Heart right ventricle (tissue), 16 donors: ENCODE measurements at regions of chr11 and their contacts with region 1.

Region 1: GRCh38 chr11:12746593-12747097 is 72.4 kb downstream of the TEAD1 start:
- DNase-seq: peak; percentile 70 to 77
- ATAC-seq: peak; percentile 54 to 81 (median 76)
- H3K4me3 ChIP-seq: no peak overlapping the region
- H3K27ac ChIP-seq: peak overlapping the region in 9 of 10 donors; percentile 18 to 79 (median 55)
- H3K4me1 ChIP-seq: peaks cover 7 to 63% (median 26%) of the 10 kb centered on the region in 9 donors
- H3K27me3 ChIP-seq: no peaks in the 10 kb centered on the region
- CTCF ChIP-seq: peak in 1 of 9 donors; percentile 8

Region 2: GRCh38 chr11:12430955-12431354 is 315.7 kb before region 1 on chr11:
- intact Hi-C with region 1: no loop called
- DNase-seq: peak in 1 of 2 donors; percentile 61
- ATAC-seq: peak; percentile 50 to 90 (median 71)
- H3K4me3 ChIP-seq: no peak overlapping the region
- H3K27ac ChIP-seq: peak overlapping the region; percentile 7 to 78 (median 61)
- H3K4me1 ChIP-seq: peaks cover 36 to 63% (median 53%) of the 10 kb centered on the region in 9 donors
- H3K27me3 ChIP-seq: no peaks in the 10 kb centered on the region
- CTCF ChIP-seq: no peak

Region 3: DNA sequence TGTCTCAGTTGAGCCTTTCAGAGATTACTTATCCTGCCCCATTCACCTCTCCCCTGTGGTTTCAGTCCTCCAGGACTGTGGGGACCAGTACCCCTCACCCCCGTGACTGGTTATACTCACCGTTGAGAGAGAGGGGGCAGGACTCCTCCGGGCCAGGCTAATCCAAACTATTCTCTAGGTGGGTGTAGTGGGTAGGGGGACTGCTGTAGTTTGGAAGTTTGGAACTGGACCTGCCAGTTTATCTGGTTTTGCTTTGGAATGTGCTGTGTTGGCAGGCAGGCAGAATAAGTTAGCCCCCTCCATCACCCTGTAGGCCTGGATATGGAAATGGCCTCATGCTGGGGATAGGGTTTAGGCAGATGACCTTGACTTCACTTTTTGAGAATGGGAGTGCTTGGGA is 58.9 kb before region 1 on chr11:
- intact Hi-C with region 1: loop called in 2 of 10 experiments (anchors 5 to 10 kb)
- DNase-seq: no peak
- ATAC-seq: no peak
- H3K4me3 ChIP-seq: no peak overlapping the region
- H3K27ac ChIP-seq: peak overlapping the region in 2 of 10 donors; percentile 24 to 33
- H3K4me1 ChIP-seq: peaks cover 11 to 91% (median 65%) of the 10 kb centered on the region in 9 donors
- H3K27me3 ChIP-seq: peaks cover 0 to 7% (median 0%) of the 10 kb centered on the region in 7 donors
- CTCF ChIP-seq: no peak

Region 4: DNA sequence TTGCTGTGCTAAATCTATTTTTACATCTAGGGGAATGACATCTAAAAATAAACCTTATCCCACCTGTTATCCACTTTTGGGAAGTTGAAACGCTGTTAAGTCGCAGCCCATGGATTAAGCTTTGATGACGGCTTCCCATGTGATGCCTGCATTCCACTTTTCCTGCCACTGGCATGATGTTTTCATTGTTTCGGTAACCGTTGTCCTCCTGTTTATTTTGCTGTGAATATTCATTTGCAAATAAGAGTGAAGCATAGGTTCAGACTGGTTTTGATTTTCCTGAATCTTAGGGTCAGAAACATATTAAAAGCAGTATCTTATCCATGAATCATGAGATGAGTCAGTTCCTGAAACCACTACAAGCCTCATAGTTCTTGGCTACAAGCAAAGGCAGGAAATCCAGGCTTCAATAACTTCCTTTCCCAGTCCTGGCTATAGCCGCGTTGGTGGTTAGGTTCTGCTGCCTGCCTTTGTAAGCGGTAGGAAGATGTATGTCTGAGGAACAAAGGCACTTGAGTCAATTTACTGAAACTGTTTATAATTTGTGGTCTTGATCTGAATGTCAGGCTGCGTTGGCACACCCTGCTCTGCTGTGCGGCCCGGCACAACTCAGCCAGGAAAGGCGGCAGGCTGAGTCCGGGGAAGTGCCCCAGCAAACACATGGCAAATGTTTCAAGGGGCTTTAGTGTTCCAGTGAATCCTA is 53.0 kb before region 1 on chr11:
- intact Hi-C with region 1: loop called in 2 of 10 experiments (anchors 5 to 10 kb)
- DNase-seq: peak in 1 of 2 donors; percentile 68
- ATAC-seq: peak; percentile 73 to 92 (median 82)
- H3K4me3 ChIP-seq: peak overlapping the region in 6 of 10 donors; percentile 4 to 35 (median 22)
- H3K27ac ChIP-seq: peak overlapping the region; percentile 86 to 95 (median 89)
- H3K4me1 ChIP-seq: peaks cover 33 to 84% (median 71%) of the 10 kb centered on the region in 9 donors
- H3K27me3 ChIP-seq: peaks cover 0 to 46% (median 0%) of the 10 kb centered on the region in 7 donors
- CTCF ChIP-seq: peak in 1 of 9 donors; percentile 5